ENCODE measurements at regions of chr6 and their contacts with region 1.

Region 1: DNA sequence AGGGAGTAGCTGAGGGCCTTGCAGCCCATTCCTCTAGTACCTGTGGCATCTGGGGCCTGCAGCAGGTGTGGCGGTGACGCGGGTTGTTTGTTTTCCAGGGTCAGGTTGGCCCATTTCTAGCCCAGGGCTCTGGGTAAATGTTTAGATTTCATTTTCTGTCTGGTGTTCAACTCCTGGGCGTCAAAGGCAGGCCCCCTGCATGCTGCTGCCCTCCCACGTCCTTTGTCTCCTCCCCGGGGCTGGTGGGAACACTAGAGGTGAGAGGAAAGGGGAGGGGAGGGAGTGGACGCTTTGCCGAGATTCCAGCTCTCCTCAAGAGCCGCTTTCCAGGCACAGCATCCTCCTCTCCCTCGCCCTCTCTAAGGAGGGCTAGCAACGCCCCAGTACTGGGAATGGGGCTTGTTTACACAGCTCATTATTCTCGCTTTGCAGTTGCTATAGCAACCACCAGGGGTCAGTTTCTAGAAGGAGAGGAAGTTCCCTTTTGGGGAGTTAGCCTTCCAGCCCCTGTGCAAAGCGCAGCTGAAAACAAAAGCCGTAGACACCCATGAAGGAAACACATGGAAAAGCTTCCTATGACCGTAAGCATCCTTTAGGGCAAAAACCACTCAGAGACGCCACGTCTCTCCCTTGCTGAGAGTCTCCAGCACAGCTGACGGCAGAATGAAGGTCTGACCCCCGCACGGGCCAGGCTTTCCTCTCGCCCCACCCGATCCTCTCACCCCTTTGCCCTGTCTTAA is 170.6 kb downstream of the LY86 start:
- H3K4me3 ChIP-seq: no peak overlapping the region
- H3K27ac ChIP-seq: no peak overlapping the region
- H3K4me1 ChIP-seq: peaks cover 4% of the 10 kb centered on the region; the same call in 1 of the 2 replicates
- CTCF ChIP-seq: no peak

Region 2: DNA sequence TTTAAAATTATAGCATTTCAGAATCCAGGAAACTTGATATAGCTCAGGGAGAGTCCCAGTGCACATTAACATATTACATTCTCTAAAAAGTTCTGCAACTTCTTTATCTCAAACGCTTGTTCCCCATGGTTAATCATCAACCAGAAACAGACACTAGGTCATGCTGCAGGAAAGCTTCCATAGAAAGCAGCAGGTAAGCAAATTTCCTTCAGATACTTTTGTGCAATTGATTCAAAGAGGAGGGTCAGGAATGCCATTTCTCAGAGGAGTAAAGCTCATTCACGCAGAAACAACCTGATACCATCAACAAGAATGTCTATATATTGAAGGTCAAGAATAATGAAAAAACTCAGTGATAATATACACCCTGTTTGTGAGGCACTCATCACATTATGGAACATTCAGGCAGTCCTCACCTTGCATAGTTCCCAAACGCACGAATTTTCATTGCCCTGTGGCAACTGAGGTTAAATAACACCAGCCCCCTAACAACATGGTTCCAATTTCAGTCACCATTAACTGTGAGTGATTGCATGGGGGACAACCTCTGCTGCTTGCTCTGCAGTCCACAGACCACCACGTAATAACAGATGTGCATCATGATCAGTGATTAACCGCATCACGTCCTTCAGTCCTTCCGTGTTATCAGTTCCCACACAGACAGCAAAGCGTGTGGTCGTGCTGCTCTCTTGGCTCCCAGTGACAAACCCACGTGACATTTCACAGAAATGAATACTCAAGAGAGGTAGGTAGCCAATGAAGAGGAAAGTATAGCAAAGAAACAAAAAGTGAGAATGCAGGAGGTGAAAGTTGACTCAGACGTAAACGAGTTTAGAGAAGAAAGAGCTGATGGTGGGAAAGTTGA is 74.9 kb before region 1 on chr6:
- CTCF ChIA-PET with region 1: no interaction called
- POLR2A ChIA-PET with region 1: no interaction called
- H3K4me3 ChIP-seq: no peak overlapping the region
- H3K27ac ChIP-seq: no peak overlapping the region
- H3K4me1 ChIP-seq: peaks cover 6% of the 10 kb centered on the region; the same call in 1 of the 2 replicates
- CTCF ChIP-seq: no peak

Region 3: GRCh38 chr6:6769466-6769865 is 10.4 kb after region 1 on chr6:
- CTCF ChIA-PET with region 1: interaction called, 10 read pairs
- POLR2A ChIA-PET with region 1: no interaction called
- H3K4me3 ChIP-seq: no peak overlapping the region
- H3K27ac ChIP-seq: no peak overlapping the region
- H3K4me1 ChIP-seq: no peaks in the 10 kb centered on the region
- CTCF ChIP-seq: no peak